IMR-90 (cell line): ENCODE measurements at regions of chr14 and their contacts with region 1.

Region 1: GRCh38 chr14:100406505-100407131 is 83.5 kb downstream of the SLC25A47 start:
- DNase-seq: peak; percentile 32
- ATAC-seq: no peak
- H3K4me3 ChIP-seq: no peak overlapping the region
- H3K27ac ChIP-seq: no peak overlapping the region
- H3K4me1 ChIP-seq: peaks cover 10% of the 10 kb centered on the region
- H3K27me3 ChIP-seq: no peaks in the 10 kb centered on the region
- CTCF ChIP-seq: no peak
- POLR2A ChIP-seq: no peak
- RAD21 ChIP-seq: no peak

Region 2: DNA sequence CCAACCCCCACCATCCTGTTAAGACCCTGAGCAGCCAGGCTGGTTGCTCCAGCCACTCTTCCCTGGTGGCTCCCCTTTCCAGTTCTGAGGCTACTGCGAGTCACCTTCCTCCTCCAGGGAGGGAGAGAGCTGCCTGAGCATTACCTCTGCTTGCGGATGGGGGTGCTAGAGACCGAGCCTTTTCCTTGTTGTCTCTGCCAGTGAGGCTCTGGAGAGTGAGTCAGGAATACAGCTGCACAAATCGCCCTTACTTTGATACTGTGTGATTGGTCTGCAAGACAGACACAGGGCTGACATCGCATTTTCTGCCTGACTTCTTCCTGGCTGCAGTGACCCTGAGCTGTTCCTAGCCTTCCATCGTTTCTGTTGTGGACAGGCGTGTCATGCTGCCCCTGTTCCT is 10.8 kb after region 1 on chr14:
- CTCF ChIA-PET with region 1: interaction called, 10 read pairs
- POLR2A ChIA-PET with region 1: no interaction called
- dilution Hi-C with region 1: no loop called
- in situ Hi-C with region 1: no loop called
- intact Hi-C with region 1: no loop called
- DNase-seq: peak; percentile 97
- ATAC-seq: peak; percentile 97
- H3K4me3 ChIP-seq: no peak overlapping the region
- H3K27ac ChIP-seq: 0 out of 2 replicates have a peak overlapping the region, but pooled peaks have one; percentile 5
- H3K4me1 ChIP-seq: peaks cover 10% of the 10 kb centered on the region
- H3K27me3 ChIP-seq: no peaks in the 10 kb centered on the region
- CTCF ChIP-seq: peak; percentile 96
- POLR2A ChIP-seq: peak; percentile 65
- RAD21 ChIP-seq: peak; percentile 98